Mammary epithelial cell (primary cell): ENCODE measurements at regions of chr19 and their contacts with region 1.

Region 1: GRCh38 chr19:45770192-45771101 is 1.4 kb upstream of the SIX5 start:
- DNase-seq: peak; percentile 98
- H3K4me3 ChIP-seq: peak overlapping the region; percentile 50 to 83 (median 75)
- H3K27ac ChIP-seq: no peak overlapping the region
- H3K4me1 ChIP-seq: peaks cover 33% of the 10 kb centered on the region
- H3K27me3 ChIP-seq: no peaks in the 10 kb centered on the region
- CTCF ChIP-seq: peak; percentile 44 to 93

Region 2: DNA sequence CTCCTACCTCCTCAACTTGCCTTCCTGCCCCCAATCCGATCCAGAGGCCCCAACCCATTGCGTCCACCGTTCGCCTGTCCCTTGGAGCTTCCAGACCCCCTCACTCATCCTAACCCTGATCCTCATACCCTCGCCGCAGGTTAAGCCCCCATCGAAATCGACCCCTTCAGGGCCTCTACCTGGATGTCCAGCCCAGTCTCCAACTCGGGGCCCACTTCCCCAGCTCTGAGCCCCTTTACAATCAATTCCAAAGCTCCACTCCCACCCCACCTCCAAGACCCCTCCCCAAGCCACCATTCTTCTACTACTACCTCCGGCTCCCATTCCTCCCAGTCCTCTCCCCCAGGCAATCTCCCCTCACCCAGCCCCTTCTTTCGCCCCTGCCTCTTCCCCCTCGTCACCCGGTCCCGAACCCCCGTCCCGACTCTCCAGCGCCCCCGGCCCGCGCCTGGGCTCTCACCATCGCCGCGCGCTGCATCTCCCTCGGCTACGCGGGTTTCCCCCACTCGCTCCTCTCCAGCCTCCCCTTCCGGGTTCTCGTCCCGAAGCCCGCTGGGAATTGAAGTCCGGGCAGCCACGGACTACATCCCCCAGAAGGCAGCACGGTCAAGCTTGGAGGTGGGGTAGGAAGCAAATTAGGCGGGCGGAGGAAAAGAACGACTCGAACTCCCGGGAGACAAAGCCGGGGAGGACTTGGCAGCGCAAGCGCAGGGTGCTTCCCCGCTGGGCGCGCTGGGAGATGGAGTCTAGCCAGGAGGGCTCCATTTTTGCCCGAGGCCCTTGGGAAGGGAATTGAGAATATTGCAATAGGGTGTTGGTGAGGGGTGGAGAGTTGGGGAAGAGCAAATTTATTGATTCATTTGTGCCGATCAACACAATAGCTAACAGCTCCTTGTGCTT is 39.8 kb before region 1 on chr19 and contains the start of gene FBXO46:
- CTCF ChIA-PET with region 1: no interaction called
- dilution Hi-C with region 1: no loop called
- in situ Hi-C with region 1: no loop called
- intact Hi-C with region 1: loop called (anchors 1 kb)
- DNase-seq: peak; percentile 99
- H3K4me3 ChIP-seq: peak within 1 kb of the TSS; percentile 72 to 86 (median 79)
- H3K27ac ChIP-seq: peak within 1 kb of the TSS; percentile 64
- H3K4me1 ChIP-seq: peaks cover 4% of the 10 kb centered on the region
- H3K27me3 ChIP-seq: no peaks in the 10 kb centered on the region
- CTCF ChIP-seq: peak in 1 of 2 donors; percentile 32
- total RNA-seq, gene FBXO46: 9.5 to 19.5 TPM

Region 3: GRCh38 chr19:45798995-45799517 is 28.6 kb after region 1 on chr19:
- CTCF ChIA-PET with region 1: interaction called, 8 read pairs
- dilution Hi-C with region 1: no loop called
- in situ Hi-C with region 1: no loop called
- intact Hi-C with region 1: loop called (anchors 1 kb)
- DNase-seq: peak; percentile 41
- H3K4me3 ChIP-seq: no peak overlapping the region
- H3K27ac ChIP-seq: no peak overlapping the region
- H3K4me1 ChIP-seq: peaks cover 3% of the 10 kb centered on the region
- H3K27me3 ChIP-seq: no peaks in the 10 kb centered on the region
- CTCF ChIP-seq: peak; percentile 78 to 82

Region 4: DNA sequence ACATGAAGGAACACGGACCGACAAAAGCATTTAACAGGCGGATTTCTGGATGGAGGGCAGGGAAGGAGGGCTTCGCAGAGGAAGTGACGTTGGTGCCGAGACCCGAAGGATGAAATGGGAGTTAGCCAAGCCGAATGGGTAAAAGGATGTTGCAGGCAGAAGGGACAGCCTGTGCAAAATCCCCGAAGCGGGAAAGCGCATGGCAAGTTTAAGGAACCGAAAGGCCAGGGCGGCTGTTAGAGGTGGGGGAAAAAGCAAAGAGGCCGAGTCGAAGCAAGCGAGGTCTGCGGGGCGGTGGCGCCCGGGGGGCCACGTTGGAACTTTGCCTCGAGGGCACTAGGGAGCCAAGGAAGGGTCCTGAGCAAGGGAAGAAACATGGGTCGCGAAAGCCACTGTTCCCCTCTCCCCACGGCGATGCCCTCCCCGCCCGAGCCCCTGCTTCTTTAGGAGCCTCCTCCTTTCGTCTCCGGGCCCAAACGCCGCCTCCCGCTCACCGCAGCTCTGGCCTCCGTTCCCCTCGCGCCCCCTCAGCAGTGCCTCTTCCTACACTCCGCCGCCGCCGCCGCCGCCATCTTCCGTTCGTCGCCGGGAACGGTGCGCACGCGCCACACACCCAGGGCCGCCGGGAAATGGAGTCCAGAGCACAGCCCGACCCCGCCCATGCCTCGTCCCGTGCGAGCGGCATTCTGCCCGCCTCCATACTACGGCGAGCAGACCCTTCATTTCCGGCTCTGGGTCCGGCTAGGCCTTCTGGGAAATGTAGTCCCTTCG is 92.3 kb after region 1 on chr19 and contains the start of gene SYMPK:
- CTCF ChIA-PET with region 1: interaction called, 16 read pairs
- dilution Hi-C with region 1: no loop called
- in situ Hi-C with region 1: no loop called
- intact Hi-C with region 1: no loop called
- DNase-seq: peak; percentile 98
- H3K4me3 ChIP-seq: peak within 1 kb of the TSS; percentile 94 to 97 (median 94)
- H3K27ac ChIP-seq: peak within 1 kb of the TSS; percentile 86
- H3K4me1 ChIP-seq: no peaks in the 10 kb centered on the region
- H3K27me3 ChIP-seq: peaks cover 2% of the 10 kb centered on the region
- CTCF ChIP-seq: no peak
- total RNA-seq, gene SYMPK: 32.3 to 81.6 TPM